Naive thymus-derived CD4-positive, alpha-beta T cell (primary cell): ENCODE measurements at regions of chr2 and their contacts with region 1.

Region 1: DNA sequence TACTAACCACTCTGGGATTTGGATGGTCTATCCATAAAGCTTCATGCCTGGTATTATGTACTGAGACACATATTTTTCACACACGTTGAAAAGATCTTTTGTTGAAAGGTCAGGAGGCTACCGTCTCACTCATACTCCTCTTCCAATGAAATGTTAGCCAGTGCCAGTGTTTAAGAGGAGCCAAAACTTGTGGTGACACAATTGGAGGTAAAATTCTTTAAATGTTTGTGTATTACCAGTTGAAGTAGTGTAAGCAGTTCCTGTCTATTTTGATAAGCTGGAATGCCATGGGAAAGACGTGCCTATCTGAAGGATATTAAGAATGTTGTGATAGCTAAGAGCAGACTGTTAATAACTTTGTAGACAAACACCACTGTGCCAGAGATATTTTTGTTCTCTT is 32.1 kb downstream of the MARCHF7 start:
- DNase-seq: no peak
- ATAC-seq: no peak
- H3K4me3 ChIP-seq: no peak overlapping the region
- H3K4me3 Mint-ChIP-seq: no peak overlapping the region
- H3K27ac ChIP-seq: no peak overlapping the region
- H3K27ac Mint-ChIP-seq: peak overlapping the region in 2 of 9 donors; percentile 7 to 36
- H3K4me1 ChIP-seq: no peaks in the 10 kb centered on the region
- H3K4me1 Mint-ChIP-seq: peaks cover 12 to 47% (median 30%) of the 10 kb centered on the region in 7 donors
- H3K27me3 ChIP-seq: no peaks in the 10 kb centered on the region
- H3K27me3 Mint-ChIP-seq: no peaks in the 10 kb centered on the region

Region 2: GRCh38 chr2:159755788-159756187 is 11.4 kb after region 1 on chr2:
- CTCF ChIA-PET with region 1: no interaction called
- POLR2A ChIA-PET with region 1: no interaction called
- intact Hi-C with region 1: loop called in 1 of 2 experiments (anchors 1 kb)
- DNase-seq: no peak
- ATAC-seq: peak; percentile 32
- H3K4me3 ChIP-seq: no peak overlapping the region
- H3K4me3 Mint-ChIP-seq: no peak overlapping the region
- H3K27ac ChIP-seq: no peak overlapping the region
- H3K27ac Mint-ChIP-seq: no peak overlapping the region
- H3K4me1 ChIP-seq: no peaks in the 10 kb centered on the region
- H3K4me1 Mint-ChIP-seq: peaks cover 0 to 32% (median 20%) of the 10 kb centered on the region in 7 donors
- H3K27me3 ChIP-seq: no peaks in the 10 kb centered on the region
- H3K27me3 Mint-ChIP-seq: no peaks in the 10 kb centered on the region

Region 3: DNA sequence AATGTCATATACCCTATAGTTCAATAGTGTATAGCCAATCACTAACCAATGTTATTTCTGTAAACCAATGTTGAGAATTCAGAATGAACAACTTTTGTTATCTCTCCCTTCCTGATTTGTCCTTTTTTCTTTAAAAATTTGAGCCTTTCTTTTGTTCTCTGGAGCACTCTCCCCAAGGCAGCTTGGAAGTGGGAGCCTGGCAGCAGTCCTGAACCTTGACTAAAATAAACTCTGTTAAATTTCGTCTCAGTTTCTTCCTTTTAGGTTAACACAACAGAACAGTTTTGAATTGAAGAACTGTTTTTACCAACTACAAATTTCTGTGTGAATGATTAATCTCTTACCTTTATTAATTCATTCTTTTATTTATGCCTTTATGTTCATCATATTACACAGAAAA is 17.7 kb after region 1 on chr2:
- CTCF ChIA-PET with region 1: no interaction called
- POLR2A ChIA-PET with region 1: no interaction called
- intact Hi-C with region 1: loop called in 1 of 2 experiments (anchors 2 kb)
- DNase-seq: no peak
- ATAC-seq: no peak
- H3K4me3 ChIP-seq: no peak overlapping the region
- H3K4me3 Mint-ChIP-seq: no peak overlapping the region
- H3K27ac ChIP-seq: no peak overlapping the region
- H3K27ac Mint-ChIP-seq: peak overlapping the region in 4 of 9 donors; percentile 22 to 75 (median 46)
- H3K4me1 ChIP-seq: no peaks in the 10 kb centered on the region
- H3K4me1 Mint-ChIP-seq: peaks cover 6 to 24% (median 17%) of the 10 kb centered on the region in 7 donors
- H3K27me3 ChIP-seq: no peaks in the 10 kb centered on the region
- H3K27me3 Mint-ChIP-seq: no peaks in the 10 kb centered on the region